CD8-positive, alpha-beta T cell (primary cell): ENCODE measurements at regions of chr4 and their contacts with region 1.

Region 1: GRCh38 chr4:63020661-63021060 is 1388.6 kb downstream of the TECRL start:
- DNase-seq: no peak
- ATAC-seq: no peak
- H3K4me3 ChIP-seq: no peak overlapping the region
- H3K4me3 Mint-ChIP-seq: no peak overlapping the region
- H3K27ac ChIP-seq: no peak overlapping the region
- H3K27ac Mint-ChIP-seq: no peak overlapping the region
- H3K4me1 ChIP-seq: no peaks in the 10 kb centered on the region
- H3K4me1 Mint-ChIP-seq: no peaks in the 10 kb centered on the region
- H3K27me3 ChIP-seq: no peaks in the 10 kb centered on the region
- H3K27me3 Mint-ChIP-seq: no peaks in the 10 kb centered on the region
- CTCF ChIP-seq: no peak

Region 2: DNA sequence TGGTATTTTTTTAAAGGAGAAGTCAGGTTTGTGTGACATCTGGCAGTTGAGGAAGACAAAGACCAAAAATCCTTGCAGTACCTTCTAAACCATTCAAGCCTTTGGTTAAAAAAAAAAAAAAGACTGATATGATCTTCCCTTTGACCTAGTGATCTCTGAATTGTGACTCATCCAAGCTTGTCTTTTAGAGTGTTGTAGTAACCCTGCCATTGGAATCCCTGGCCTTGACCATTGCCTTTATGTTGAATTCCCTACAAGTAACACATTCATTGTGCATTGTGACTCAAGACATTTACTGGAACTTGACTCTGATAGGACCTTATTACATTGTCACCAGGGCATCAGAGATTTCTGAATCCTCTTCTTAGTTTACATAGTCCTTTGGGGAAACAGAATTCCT is 80.4 kb before region 1 on chr4:
- CTCF ChIA-PET with region 1: no interaction called
- POLR2A ChIA-PET with region 1: no interaction called
- intact Hi-C with region 1: no loop called
- DNase-seq: no peak
- ATAC-seq: no peak
- H3K4me3 ChIP-seq: no peak overlapping the region
- H3K4me3 Mint-ChIP-seq: no peak overlapping the region
- H3K27ac ChIP-seq: no peak overlapping the region
- H3K27ac Mint-ChIP-seq: no peak overlapping the region
- H3K4me1 ChIP-seq: no peaks in the 10 kb centered on the region
- H3K4me1 Mint-ChIP-seq: no peaks in the 10 kb centered on the region
- H3K27me3 ChIP-seq: no peaks in the 10 kb centered on the region
- H3K27me3 Mint-ChIP-seq: no peaks in the 10 kb centered on the region
- CTCF ChIP-seq: no peak

Region 3: DNA sequence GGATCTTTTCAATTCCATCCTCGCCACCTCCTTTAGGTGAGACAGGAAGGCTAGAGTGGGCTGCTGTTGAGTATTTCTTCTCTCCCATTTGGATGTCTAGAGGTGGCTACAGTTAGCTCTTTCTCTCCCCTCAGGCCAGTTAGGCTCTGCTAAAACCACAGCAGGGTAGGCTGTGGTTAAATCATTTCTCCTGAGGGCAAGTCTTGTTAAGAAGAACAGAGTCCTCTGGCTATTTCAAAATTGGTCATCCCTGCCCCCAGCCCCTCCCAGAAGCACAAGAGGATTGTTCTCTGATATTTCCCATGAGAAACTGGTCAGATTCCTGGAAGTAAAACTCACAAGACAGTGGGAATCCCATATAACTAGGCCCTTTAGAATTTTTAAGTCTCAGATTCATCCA is 29.1 kb after region 1 on chr4:
- CTCF ChIA-PET with region 1: no interaction called
- POLR2A ChIA-PET with region 1: no interaction called
- intact Hi-C with region 1: loop called in 1 of 2 experiments (anchors 1 kb)
- DNase-seq: no peak
- ATAC-seq: no peak
- H3K4me3 ChIP-seq: no peak overlapping the region
- H3K4me3 Mint-ChIP-seq: no peak overlapping the region
- H3K27ac ChIP-seq: no peak overlapping the region
- H3K27ac Mint-ChIP-seq: no peak overlapping the region
- H3K4me1 ChIP-seq: no peaks in the 10 kb centered on the region
- H3K4me1 Mint-ChIP-seq: no peaks in the 10 kb centered on the region
- H3K27me3 ChIP-seq: no peaks in the 10 kb centered on the region
- H3K27me3 Mint-ChIP-seq: no peaks in the 10 kb centered on the region
- CTCF ChIP-seq: no peak

Region 4: DNA sequence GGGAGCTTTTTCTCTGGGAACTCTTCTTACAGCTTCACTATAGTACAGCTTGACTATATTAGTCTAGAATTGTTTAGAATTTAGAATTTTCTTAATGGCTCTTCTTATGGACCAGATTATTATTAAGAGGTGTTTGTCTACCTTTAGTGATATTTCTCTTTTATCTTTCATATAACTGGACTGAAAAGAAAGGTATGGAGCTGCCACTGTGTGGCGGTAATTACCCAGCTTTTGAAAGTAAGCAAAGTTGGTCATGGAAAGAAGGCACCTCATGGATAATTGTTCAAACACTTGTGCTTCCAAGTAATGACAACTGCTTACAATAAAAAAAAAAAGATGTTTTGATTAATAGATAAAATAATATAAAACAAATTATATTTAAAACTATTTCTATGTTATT is 276.1 kb after region 1 on chr4:
- CTCF ChIA-PET with region 1: no interaction called
- POLR2A ChIA-PET with region 1: no interaction called
- intact Hi-C with region 1: no loop called
- DNase-seq: no peak
- ATAC-seq: no peak
- H3K4me3 ChIP-seq: no peak overlapping the region
- H3K4me3 Mint-ChIP-seq: no peak overlapping the region
- H3K27ac ChIP-seq: no peak overlapping the region
- H3K27ac Mint-ChIP-seq: no peak overlapping the region
- H3K4me1 ChIP-seq: no peaks in the 10 kb centered on the region
- H3K4me1 Mint-ChIP-seq: no peaks in the 10 kb centered on the region
- H3K27me3 ChIP-seq: no peaks in the 10 kb centered on the region
- H3K27me3 Mint-ChIP-seq: no peaks in the 10 kb centered on the region
- CTCF ChIP-seq: no peak